ENCODE measurements at regions of chr17 and their contacts with region 1.

Region 1: DNA sequence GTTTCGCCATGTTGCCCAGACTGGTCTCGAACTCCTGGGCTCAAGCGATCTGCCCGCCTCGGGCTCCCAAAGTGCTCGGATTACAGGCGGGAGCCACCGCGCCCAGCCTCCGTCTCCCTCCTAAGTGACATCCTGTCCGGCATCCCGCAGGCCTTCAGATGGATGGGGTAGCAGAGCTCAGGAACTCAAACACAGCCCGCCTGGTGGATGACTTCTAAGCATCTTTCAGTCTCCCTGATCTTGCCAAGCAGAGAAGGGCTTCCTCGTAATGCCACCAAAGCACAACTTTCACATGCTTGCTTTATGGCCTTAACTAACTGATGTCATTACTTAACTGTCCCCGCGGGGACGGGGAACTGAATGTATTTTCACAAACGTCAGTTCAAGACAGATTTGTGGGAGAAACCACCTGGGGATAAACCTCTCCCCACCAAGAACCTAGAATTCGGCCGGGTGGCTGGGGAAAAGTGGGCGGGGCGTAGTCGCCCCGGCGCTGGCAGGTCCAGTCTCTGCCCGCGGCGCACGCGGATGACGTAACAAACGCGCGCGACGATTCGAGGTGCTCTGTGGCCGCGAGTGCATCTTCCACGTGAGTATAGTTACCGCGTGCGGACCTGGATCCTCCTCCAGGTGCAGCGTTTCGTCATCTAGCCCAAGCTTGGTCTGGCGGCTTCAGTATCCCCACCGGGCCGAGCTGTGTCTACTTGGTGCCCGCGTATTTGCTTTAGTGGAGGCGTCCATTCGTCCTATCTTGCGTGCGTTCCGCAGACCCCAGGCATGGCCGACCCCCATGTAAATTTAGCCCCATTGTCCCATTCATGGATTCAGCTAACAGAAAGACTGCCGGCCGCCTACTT is at the start of gene PFAS:
- DNase-seq: peak; percentile 95
- ATAC-seq: peak; percentile 83 to 91 (median 85)
- H3K4me3 ChIP-seq: peak within 1 kb of the TSS; percentile 57 to 87 (median 75)
- H3K27ac ChIP-seq: peak within 1 kb of the TSS; percentile 90 to 99 (median 94)
- H3K4me1 ChIP-seq: peaks cover 0 to 34% (median 12%) of the 10 kb centered on the region in 9 donors
- H3K27me3 ChIP-seq: no peaks in the 10 kb centered on the region
- CTCF ChIP-seq: no peak
- total RNA-seq, gene PFAS: 9.6 to 17.9 (median 13.7) TPM

Region 2: DNA sequence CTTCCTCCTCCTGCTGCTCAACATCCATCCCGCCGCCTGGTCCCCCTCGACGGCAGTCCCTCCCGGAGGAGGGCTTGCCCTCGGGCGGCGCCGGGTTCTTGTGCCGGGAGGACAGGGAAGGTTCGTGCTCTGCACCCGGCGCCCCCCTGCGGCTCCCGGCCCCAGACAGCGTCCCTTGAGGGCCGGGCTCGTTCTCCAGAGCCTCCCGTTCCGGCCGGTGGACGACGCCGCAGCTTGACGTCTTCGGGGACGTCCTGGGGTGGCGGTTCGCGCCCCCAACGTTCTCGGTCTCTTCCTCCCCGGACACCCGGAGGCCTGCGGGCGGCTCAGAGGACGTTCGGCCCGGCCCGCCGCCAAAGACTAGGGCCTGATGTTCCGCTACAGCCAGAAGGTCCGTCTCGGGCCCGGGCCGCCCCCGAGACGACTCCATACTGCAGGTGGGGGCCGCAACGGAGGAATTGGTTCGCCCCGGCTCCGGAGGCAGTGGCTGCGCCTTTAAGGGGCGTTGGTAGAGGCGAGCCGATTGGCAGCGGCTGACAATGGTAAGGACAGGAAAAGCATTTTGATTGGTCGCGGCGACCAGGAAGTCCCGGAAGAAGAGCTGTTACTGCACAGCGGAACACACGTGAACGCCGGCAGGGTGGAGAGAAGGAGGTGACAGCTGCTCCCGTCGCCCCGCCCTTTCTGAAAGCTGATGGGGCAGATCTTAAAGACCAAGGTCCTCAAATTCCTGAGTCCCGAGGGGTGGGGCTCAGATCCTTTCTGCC is 59.1 kb before region 1 on chr17 and contains the start of gene BORCS6:
- intact Hi-C with region 1: loop called in 3 of 10 experiments (anchors 1 to 2 kb)
- DNase-seq: peak; percentile 96 to 98
- ATAC-seq: peak; percentile 70 to 83 (median 76)
- H3K4me3 ChIP-seq: peak within 1 kb of the TSS; percentile 29 to 90 (median 82)
- H3K27ac ChIP-seq: peak within 1 kb of the TSS; percentile 87 to 99 (median 94)
- H3K4me1 ChIP-seq: peaks cover 11 to 65% (median 42%) of the 10 kb centered on the region in 9 donors
- H3K27me3 ChIP-seq: no peaks in the 10 kb centered on the region
- CTCF ChIP-seq: peak in 4 of 9 donors; percentile 10 to 33 (median 22)
- total RNA-seq, gene BORCS6: 5.3 to 9.4 (median 7.7) TPM

Region 3: DNA sequence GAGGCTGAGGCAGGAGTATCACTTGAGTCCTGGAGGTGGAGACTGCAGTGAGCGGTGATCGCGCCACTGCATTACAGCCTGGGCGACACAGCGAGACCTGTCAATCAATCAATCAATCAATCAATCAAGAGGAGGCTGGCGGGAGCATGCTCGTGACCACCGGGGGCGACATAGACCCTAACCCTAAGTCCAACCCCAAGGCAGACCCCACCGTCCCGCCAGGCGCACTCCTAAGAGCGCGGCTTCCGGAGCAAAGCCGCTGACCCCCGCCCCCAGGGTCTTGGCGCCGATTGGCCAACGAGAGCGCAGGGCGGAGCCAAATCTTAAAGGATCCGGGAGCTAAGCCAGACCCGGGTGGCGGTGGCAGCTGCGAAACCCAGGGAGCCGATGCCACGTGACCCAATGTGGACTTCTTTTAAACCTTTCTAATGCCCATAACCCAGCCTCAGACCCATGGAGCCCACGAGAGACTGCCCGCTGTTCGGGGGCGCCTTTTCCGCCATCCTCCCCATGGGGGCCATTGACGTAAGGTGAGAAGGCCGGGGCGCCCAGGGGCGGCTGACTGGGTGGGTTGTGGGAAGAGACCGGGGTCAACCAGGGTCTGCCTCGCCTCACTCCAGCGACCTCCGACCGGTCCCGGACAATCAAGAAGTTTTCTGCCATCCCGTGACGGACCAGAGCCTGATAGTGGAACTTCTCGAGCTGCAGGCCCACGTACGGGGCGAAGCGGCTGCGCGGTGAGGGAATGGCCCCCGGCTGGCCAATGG is 39.5 kb after region 1 on chr17 and contains the start of gene RANGRF:
- intact Hi-C with region 1: loop called in 6 of 10 experiments (anchors 2 to 5 kb)
- DNase-seq: peak; percentile 91
- ATAC-seq: peak; percentile 91 to 97 (median 95)
- H3K4me3 ChIP-seq: peak within 1 kb of the TSS; percentile 67 to 85 (median 75)
- H3K27ac ChIP-seq: peak within 1 kb of the TSS; percentile 76 to 95 (median 92)
- H3K4me1 ChIP-seq: peaks cover 7 to 25% (median 17%) of the 10 kb centered on the region in 9 donors
- H3K27me3 ChIP-seq: no peaks in the 10 kb centered on the region
- CTCF ChIP-seq: no peak
- total RNA-seq, gene RANGRF: 20.7 to 28.2 (median 24.4) TPM

Region 4: DNA sequence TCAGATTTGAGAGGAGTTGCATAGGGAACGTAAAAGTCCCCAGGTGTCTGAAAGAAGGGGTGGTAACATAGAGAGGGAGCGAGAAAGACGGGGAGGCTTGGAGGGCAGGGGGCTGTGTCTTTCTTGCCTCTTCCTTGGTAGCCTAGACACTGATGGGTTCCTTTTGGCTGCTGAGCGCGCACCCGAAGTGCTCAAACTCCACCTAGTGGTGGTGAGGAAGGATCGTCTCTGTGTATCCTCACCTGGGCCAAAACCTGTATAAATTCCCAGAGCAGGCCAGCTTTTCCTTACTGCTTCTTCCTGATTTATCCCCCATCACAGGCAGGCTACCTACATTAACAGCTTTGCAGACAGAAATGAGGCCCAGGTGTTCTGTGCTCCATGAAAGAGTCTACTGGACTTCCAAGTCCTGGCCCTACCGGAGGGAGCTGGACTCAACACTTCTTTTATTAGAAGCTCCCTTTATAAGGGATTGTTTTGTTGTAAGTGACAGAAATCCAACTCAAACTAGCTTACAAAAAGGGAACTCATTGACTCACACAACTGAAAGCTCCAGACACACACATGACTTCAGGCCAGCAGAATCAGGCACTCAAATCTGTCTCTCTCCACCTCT is 51.8 kb after region 1 on chr17:
- intact Hi-C with region 1: loop called in 4 of 10 experiments (anchors 2 to 5 kb)
- DNase-seq: peak; percentile 38 to 45
- ATAC-seq: peak; percentile 65 to 93 (median 91)
- H3K4me3 ChIP-seq: no peak overlapping the region
- H3K27ac ChIP-seq: no peak overlapping the region
- H3K4me1 ChIP-seq: peaks cover 0 to 13% (median 3%) of the 10 kb centered on the region in 9 donors
- H3K27me3 ChIP-seq: no peaks in the 10 kb centered on the region
- CTCF ChIP-seq: peak; percentile 76 to 90 (median 85)

Region 5: DNA sequence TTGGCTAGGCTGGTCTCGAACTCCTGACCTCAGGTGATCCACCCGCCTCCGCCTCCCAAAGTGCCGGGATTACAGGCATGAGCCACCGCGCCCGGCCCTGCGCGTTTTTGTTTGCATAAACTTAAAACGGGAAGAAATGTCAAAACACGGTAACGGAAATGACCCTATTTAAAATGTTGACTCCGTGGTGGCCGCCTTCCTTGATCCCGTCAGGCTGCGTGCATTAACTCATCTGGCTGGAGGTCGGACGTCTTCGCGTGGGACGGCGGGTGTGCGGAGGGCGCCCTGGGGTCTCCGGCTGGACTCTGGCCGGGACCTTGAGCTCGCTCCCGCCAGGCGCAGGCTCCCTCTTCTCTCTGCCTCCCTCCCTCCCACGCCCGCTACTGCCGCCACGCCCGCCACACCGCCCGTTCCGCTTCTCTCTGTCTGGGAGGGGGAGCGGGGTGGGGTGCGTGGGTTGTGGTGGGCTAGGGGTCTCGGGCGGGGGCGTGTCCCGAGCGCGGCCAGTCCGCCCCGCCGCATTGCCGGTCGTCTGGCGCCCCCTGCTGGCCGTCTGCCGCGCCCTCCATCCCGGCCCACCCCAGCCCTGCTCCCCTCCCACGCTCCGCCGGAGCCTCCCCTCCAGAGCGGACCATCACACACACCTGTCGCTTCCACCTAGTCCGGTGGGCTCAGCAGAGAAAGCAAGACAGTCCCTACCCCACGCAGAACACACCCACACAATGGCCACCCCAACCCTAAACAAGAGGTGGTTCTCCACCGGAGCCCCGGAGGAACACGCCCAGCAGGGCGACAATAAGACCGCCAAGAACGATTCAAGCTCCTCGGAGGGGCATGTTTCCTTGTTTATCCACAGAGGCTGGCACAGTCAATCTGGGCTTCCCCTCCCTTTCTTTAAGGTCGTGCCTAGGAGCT is 496.9 kb after region 1 on chr17:
- intact Hi-C with region 1: loop called in 1 of 10 experiments (anchors 10 kb)
- DNase-seq: peak; percentile 71 to 80
- ATAC-seq: peak; percentile 90 to 96 (median 94)
- H3K4me3 ChIP-seq: peak overlapping the region; percentile 54 to 91 (median 74)
- H3K27ac ChIP-seq: peak overlapping the region in 7 of 10 donors; percentile 39 to 88 (median 64)
- H3K4me1 ChIP-seq: peaks cover 0 to 14% (median 5%) of the 10 kb centered on the region in 9 donors
- H3K27me3 ChIP-seq: peaks cover 0 to 5% (median 0%) of the 10 kb centered on the region in 7 donors
- CTCF ChIP-seq: peak; percentile 92 to 99 (median 97)